ENCODE measurements at regions of chr11 and their contacts with region 1.

Region 1: GRCh38 chr11:63974259-63975143 is at the start of gene COX8A:
- DNase-seq: peak; percentile 78
- ATAC-seq: peak; percentile 99
- H3K4me3 Mint-ChIP-seq: peak within 1 kb of the TSS; percentile 100
- H3K27ac Mint-ChIP-seq: peak within 1 kb of the TSS; percentile 98
- H3K4me1 Mint-ChIP-seq: peaks cover 27% of the 10 kb centered on the region
- H3K27me3 Mint-ChIP-seq: no peaks in the 10 kb centered on the region
- CTCF ChIP-seq: no peak
- total RNA-seq, gene COX8A: 182 and 217 TPM in 2 replicates

Region 2: GRCh38 chr11:63829823-63830489 is 144.5 kb before region 1 on chr11:
- CTCF ChIA-PET with region 1: no interaction called
- POLR2A ChIA-PET with region 1: no interaction called
- intact Hi-C with region 1: no loop called
- DNase-seq: no peak
- ATAC-seq: no peak
- H3K4me3 Mint-ChIP-seq: no peak overlapping the region
- H3K27ac Mint-ChIP-seq: no peak overlapping the region
- H3K4me1 Mint-ChIP-seq: peaks cover 2% of the 10 kb centered on the region
- H3K27me3 Mint-ChIP-seq: no peaks in the 10 kb centered on the region
- CTCF ChIP-seq: no peak

Region 3: GRCh38 chr11:63986156-63986931 is 11.8 kb after region 1 on chr11 and contains the start of gene OTUB1:
- CTCF ChIA-PET with region 1: no interaction called
- POLR2A ChIA-PET with region 1: interaction called, 17 read pairs
- intact Hi-C with region 1: loop called (anchors 1 kb)
- DNase-seq: peak; percentile 80
- ATAC-seq: peak; percentile 86
- H3K4me3 Mint-ChIP-seq: peak within 1 kb of the TSS; percentile 95
- H3K27ac Mint-ChIP-seq: peak within 1 kb of the TSS; percentile 98
- H3K4me1 Mint-ChIP-seq: peaks cover 43% of the 10 kb centered on the region
- H3K27me3 Mint-ChIP-seq: no peaks in the 10 kb centered on the region
- CTCF ChIP-seq: no peak
- total RNA-seq, gene OTUB1: 87.4 and 92.5 TPM in 2 replicates

Region 4: GRCh38 chr11:64000026-64000739 is 25.7 kb after region 1 on chr11:
- CTCF ChIA-PET with region 1: no interaction called
- POLR2A ChIA-PET with region 1: no interaction called
- intact Hi-C with region 1: loop called (anchors 2 kb)
- DNase-seq: peak; percentile 72
- ATAC-seq: peak; percentile 75
- H3K4me3 Mint-ChIP-seq: peak overlapping the region; percentile 56
- H3K27ac Mint-ChIP-seq: no peak overlapping the region
- H3K4me1 Mint-ChIP-seq: peaks cover 9% of the 10 kb centered on the region
- H3K27me3 Mint-ChIP-seq: peaks cover 2% of the 10 kb centered on the region
- CTCF ChIP-seq: no peak